ENCODE measurements at regions of chr5 and their contacts with region 1.

Region 1: GRCh38 chr5:42950440-42951292 is 89.5 kb downstream of the ANXA2R start:
- DNase-seq: peak in 8 of 9 donors; percentile 39 to 77 (median 51)
- ATAC-seq: peak; percentile 51
- H3K4me3 ChIP-seq: peak overlapping the region; percentile 80
- H3K4me3 Mint-ChIP-seq: peak overlapping the region; percentile 87 to 99 (median 97)
- H3K27ac ChIP-seq: peak overlapping the region; percentile 98
- H3K27ac Mint-ChIP-seq: peak overlapping the region; percentile 97 to 100 (median 99)
- H3K4me1 ChIP-seq: peaks cover 5 to 22% of the 10 kb centered on the region in 2 donors
- H3K4me1 Mint-ChIP-seq: peaks cover 13 to 51% (median 23%) of the 10 kb centered on the region in 7 donors
- H3K27me3 ChIP-seq: no peaks in the 10 kb centered on the region
- H3K27me3 Mint-ChIP-seq: peaks cover 0 to 9% (median 0%) of the 10 kb centered on the region in 5 donors

Region 2: GRCh38 chr5:42908509-42909488 is 41.9 kb before region 1 on chr5:
- CTCF ChIA-PET with region 1: interaction called, 20 read pairs
- POLR2A ChIA-PET with region 1: interaction called, 131 read pairs
- intact Hi-C with region 1: loop called (anchors 1 kb)
- DNase-seq: peak; percentile 76 to 93 (median 88)
- ATAC-seq: peak; percentile 92
- H3K4me3 ChIP-seq: peak overlapping the region; percentile 72
- H3K4me3 Mint-ChIP-seq: peak overlapping the region; percentile 89 to 98 (median 94)
- H3K27ac ChIP-seq: peak overlapping the region; percentile 76
- H3K27ac Mint-ChIP-seq: peak overlapping the region; percentile 64 to 97 (median 95)
- H3K4me1 ChIP-seq: peaks cover 0 to 4% of the 10 kb centered on the region in 2 donors
- H3K4me1 Mint-ChIP-seq: peaks cover 5 to 22% (median 19%) of the 10 kb centered on the region in 7 donors
- H3K27me3 ChIP-seq: no peaks in the 10 kb centered on the region
- H3K27me3 Mint-ChIP-seq: peaks cover 0 to 43% (median 0%) of the 10 kb centered on the region in 5 donors

Region 3: DNA sequence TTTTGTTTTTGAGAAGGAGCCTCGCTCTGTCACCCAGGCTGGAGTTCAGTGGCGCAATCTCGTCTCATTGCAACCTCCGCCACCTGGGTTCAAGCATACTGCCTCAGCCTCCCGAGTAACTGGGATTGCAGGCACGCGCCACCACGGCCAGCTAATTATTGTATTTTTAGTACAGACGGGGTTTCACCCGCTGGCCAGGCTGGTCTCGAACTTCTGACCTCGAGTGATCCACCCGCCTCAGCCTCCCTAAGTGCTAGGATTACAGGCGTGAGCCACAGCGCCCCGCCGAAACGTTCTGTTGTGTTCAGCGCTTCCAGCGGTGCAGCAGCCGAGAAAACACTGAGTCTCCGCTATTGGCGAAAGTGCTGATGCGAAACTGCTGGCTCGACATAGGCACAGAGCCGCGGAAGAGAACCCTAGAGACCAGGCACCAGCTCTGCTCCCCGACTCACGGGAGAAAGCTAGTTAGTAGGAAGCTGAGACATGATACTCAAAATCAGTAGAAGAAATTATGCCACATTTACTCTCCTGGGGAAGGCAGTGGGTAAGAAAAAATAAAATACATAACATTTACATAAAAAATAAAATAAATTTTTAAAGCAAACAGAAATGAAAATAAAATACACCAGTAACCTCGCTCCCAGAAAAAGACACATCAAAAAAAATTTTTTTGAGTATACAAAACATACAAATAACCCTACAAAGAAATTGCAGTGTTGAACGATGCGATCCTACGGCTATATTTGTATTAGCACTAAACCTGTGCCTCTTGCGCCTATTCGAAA is 57.9 kb after region 1 on chr5:
- CTCF ChIA-PET with region 1: interaction called, 11 read pairs
- POLR2A ChIA-PET with region 1: interaction called, 125 read pairs
- intact Hi-C with region 1: loop called (anchors 1 kb)
- DNase-seq: peak; percentile 79 to 95 (median 90)
- ATAC-seq: peak; percentile 78
- H3K4me3 ChIP-seq: peak overlapping the region; percentile 72
- H3K4me3 Mint-ChIP-seq: peak overlapping the region; percentile 85 to 98 (median 92)
- H3K27ac ChIP-seq: peak overlapping the region; percentile 92
- H3K27ac Mint-ChIP-seq: peak overlapping the region; percentile 96 to 100 (median 98)
- H3K4me1 ChIP-seq: peaks cover 22 to 24% of the 10 kb centered on the region in 2 donors
- H3K4me1 Mint-ChIP-seq: peaks cover 17 to 47% (median 29%) of the 10 kb centered on the region in 7 donors
- H3K27me3 ChIP-seq: no peaks in the 10 kb centered on the region
- H3K27me3 Mint-ChIP-seq: peaks cover 0 to 4% (median 0%) of the 10 kb centered on the region in 5 donors

Region 4: DNA sequence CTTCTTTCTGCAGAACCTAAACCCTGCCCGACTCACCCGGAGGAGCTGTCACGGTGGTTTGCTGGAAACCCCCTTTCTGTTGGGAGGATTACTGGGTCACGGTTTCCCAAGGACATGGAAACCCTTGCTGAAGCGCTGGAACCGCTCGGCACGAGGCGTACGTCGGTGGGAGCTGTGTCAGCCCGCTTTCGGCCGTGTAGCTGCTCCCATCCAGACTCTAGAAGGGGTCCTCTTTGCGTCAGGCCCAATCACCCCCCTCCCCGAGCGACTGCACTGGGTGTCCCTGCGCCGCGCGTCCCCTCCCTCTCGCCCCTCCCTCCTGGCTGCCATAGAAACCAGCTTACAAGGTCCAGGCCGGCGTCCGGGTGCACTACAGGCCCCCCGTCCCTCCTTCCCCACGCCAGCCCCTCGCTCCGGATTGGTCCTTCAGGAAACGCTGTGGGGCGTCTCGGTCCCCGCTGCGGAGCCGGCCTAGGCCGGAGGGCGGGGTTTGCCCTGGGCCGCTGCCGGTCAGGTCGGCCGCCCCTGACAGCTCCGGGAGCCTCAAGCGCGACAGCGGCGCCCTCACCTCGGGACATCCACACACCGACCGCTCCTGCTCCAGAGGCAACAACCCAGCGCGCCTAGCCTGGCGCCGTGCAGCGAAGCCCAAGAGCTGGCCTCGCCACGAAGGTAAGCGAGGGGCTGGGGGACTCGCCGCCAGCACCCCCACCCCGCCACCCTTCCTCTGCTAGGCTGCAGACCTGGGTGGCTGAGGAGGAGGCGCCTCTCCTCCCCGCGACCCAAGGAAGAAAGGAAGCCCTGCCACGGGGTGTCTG is 241.3 kb after region 1 on chr5 and contains the start of gene NIM1K:
- CTCF ChIA-PET with region 1: no interaction called
- POLR2A ChIA-PET with region 1: no interaction called
- intact Hi-C with region 1: loop called in 1 of 2 experiments (anchors 5 kb)
- DNase-seq: peak in 8 of 9 donors; percentile 7 to 55 (median 16)
- ATAC-seq: peak; percentile 51
- H3K4me3 ChIP-seq: peak within 1 kb of the TSS; percentile 63
- H3K4me3 Mint-ChIP-seq: peak within 1 kb of the TSS; percentile 81 to 94 (median 88)
- H3K27ac ChIP-seq: no peak within 1 kb of the TSS
- H3K27ac Mint-ChIP-seq: peak within 1 kb of the TSS in 6 of 9 donors; percentile 21 to 86 (median 71)
- H3K4me1 ChIP-seq: peaks cover 4 to 18% of the 10 kb centered on the region in 2 donors
- H3K4me1 Mint-ChIP-seq: peaks cover 11 to 33% (median 23%) of the 10 kb centered on the region in 7 donors
- H3K27me3 ChIP-seq: peaks cover 0 to 5% of the 10 kb centered on the region in 2 donors
- H3K27me3 Mint-ChIP-seq: peaks cover 15 to 22% (median 19%) of the 10 kb centered on the region in 5 donors
- total RNA-seq, gene NIM1K: 0.40 to 0.97 (median 0.61) TPM

Region 5: DNA sequence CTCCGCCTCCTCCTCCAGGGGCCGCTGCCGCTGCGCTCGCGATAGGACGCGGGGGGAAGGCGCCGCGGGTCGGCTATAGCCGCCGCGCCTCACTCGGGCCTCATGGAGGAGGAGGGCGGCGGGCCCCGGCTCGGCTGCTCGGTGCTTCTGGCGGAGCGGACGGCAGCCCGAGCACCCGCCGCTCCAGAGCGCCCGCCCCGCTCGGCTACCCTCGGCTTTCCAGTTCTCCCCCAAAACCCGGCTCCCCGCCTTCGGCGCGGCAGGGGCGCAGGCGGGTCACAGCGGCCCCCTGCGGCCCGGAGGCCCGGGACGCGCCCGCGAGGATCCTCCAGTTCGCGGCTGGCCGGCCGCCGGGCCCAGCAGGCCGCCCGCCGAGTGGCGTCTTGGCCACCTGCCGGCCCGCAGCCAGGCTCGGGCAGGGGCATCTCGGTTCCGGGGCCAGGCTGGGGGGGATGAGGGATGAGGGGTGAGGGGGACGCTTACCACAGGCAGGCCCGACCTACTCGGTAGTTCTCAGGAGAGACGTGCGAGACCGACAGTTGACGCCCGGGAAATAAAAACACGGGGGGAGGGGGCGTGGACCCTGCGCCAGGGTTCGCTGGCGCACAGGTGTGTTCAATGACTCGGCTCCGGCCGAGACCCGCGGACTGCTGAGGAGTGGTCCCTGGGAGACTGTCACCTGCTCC is 606.3 kb after region 1 on chr5 and contains the start of gene PAIP1:
- CTCF ChIA-PET with region 1: no interaction called
- POLR2A ChIA-PET with region 1: no interaction called
- intact Hi-C with region 1: loop called in 1 of 2 experiments (anchors 1 kb)
- DNase-seq: peak; percentile 80 to 89 (median 87)
- ATAC-seq: peak; percentile 89
- H3K4me3 ChIP-seq: peak within 1 kb of the TSS; percentile 79
- H3K4me3 Mint-ChIP-seq: peak within 1 kb of the TSS in 7 of 10 donors; percentile 88 to 97 (median 95)
- H3K27ac ChIP-seq: peak within 1 kb of the TSS; percentile 96
- H3K27ac Mint-ChIP-seq: peak within 1 kb of the TSS; percentile 91 to 99 (median 98)
- H3K4me1 ChIP-seq: peaks cover 17 to 30% of the 10 kb centered on the region in 2 donors
- H3K4me1 Mint-ChIP-seq: peaks cover 6 to 17% (median 7%) of the 10 kb centered on the region in 7 donors
- H3K27me3 ChIP-seq: no peaks in the 10 kb centered on the region
- H3K27me3 Mint-ChIP-seq: peaks cover 0 to 18% (median 5%) of the 10 kb centered on the region in 5 donors
- total RNA-seq, gene PAIP1: 20.7 to 41.7 (median 39.2) TPM